ENCODE measurements at regions of chr19 and their contacts with region 1.

Region 1: GRCh38 chr19:18203863-18204393 is at the start of gene RAB3A:
- DNase-seq: peak; percentile 100
- H3K4me3 ChIP-seq: peak within 1 kb of the TSS; percentile 46 to 81 (median 75)
- H3K27ac ChIP-seq: peak within 1 kb of the TSS; percentile 88
- H3K4me1 ChIP-seq: peaks cover 10% of the 10 kb centered on the region
- H3K27me3 ChIP-seq: peaks cover 0 to 2% of the 10 kb centered on the region in 2 experiments
- CTCF ChIP-seq: no peak
- POLR2A ChIP-seq: no peak
- total RNA-seq, gene RAB3A: 0.88 and 1.9 TPM in 2 replicates

Region 2: DNA sequence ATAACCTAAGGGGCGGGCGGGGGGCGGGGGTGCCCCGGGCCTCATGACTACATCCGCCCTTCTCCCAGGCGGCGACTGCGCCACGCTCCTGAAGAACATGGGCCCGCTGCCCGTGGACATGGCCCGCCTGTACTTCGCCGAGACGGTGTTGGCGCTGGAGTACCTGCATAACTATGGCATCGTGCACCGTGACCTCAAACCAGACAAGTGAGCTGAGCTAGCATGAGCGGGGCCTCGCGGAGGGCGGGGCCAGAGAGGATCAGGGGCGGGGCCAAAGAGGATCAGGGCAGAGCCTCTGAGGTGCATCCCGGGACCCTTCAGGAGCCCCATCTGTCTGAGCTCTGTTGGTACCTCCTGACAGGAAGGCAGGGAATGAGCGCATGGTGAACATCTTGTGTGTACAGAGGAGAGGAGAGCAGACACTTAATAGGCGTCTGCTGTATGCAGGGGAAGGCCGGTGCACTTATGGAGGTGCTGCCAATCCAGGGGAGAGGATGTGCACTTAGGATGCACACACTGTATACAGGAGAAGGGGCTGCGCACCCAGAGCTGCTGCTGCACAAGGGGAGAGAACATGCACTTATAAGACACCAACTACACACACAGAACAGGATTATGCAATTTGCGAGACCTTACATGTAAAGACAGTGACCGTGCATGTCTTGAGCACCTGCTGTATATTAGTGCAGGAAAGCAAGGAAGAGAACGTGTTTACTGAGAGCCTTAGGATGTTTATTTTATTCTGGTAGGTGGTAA is 71.9 kb before region 1 on chr19:
- CTCF ChIA-PET with region 1: no interaction called
- POLR2A ChIA-PET with region 1: no interaction called
- dilution Hi-C with region 1: no loop called
- intact Hi-C with region 1: no loop called
- DNase-seq: no peak
- H3K4me3 ChIP-seq: no peak overlapping the region
- H3K27ac ChIP-seq: no peak overlapping the region
- H3K4me1 ChIP-seq: no peaks in the 10 kb centered on the region
- H3K27me3 ChIP-seq: no peaks in the 10 kb centered on the region
- CTCF ChIP-seq: no peak
- POLR2A ChIP-seq: no peak

Region 3: GRCh38 chr19:18192673-18193387 is 11.1 kb before region 1 on chr19 and contains the start of gene MPV17L2:
- CTCF ChIA-PET with region 1: interaction called, 25 read pairs
- POLR2A ChIA-PET with region 1: no interaction called
- dilution Hi-C with region 1: no loop called
- intact Hi-C with region 1: loop called (anchors 1 kb)
- DNase-seq: peak; percentile 100
- H3K4me3 ChIP-seq: peak within 1 kb of the TSS; percentile 78 to 85 (median 82)
- H3K27ac ChIP-seq: peak within 1 kb of the TSS; percentile 56
- H3K4me1 ChIP-seq: peaks cover 14% of the 10 kb centered on the region
- H3K27me3 ChIP-seq: no peaks in the 10 kb centered on the region
- CTCF ChIP-seq: no peak
- POLR2A ChIP-seq: peak; percentile 66
- total RNA-seq, gene MPV17L2: 13.8 and 16.1 TPM in 2 replicates

Region 4: DNA sequence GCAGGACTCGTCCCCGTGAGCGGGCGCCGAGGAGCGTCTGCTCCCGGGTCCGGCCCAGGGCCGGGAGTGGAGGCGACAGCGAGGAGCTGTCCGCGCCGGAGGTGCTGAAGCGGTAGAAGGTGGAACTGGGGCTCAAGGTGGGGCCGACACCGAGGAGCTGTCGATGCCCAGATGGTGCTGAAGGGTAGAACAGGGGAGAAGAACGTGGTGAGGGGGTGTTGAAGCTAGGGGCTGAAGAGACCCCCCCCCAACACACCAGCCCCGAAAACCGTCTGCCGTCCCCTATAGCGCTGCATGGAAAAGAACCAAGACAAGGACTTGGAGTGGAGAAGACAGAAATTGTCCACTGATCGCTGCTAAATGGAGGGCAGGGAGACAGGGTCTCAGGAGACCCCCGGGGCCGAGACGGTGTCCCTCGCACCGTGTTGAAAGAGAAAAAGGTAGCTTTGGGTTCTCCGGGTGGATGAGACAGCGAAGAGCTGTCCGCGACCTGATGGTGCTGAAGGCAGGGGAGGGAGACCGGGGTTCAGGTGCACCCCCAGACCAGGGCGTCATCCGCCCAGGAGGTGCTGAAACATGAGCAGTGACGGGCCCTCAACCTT is 29.4 kb after region 1 on chr19:
- CTCF ChIA-PET with region 1: interaction called, 20 read pairs
- POLR2A ChIA-PET with region 1: no interaction called
- dilution Hi-C with region 1: no loop called
- intact Hi-C with region 1: no loop called
- DNase-seq: peak; percentile 34
- H3K4me3 ChIP-seq: no peak overlapping the region
- H3K27ac ChIP-seq: no peak overlapping the region
- H3K4me1 ChIP-seq: no peaks in the 10 kb centered on the region
- H3K27me3 ChIP-seq: peaks cover 0 to 6% of the 10 kb centered on the region in 2 experiments
- CTCF ChIP-seq: no peak
- POLR2A ChIP-seq: no peak

Region 5: GRCh38 chr19:18245297-18245696 is 41.4 kb after region 1 on chr19:
- CTCF ChIA-PET with region 1: interaction called, 296 read pairs
- POLR2A ChIA-PET with region 1: no interaction called
- dilution Hi-C with region 1: no loop called
- intact Hi-C with region 1: no loop called
- DNase-seq: no peak
- H3K4me3 ChIP-seq: no peak overlapping the region
- H3K27ac ChIP-seq: no peak overlapping the region
- H3K4me1 ChIP-seq: no peaks in the 10 kb centered on the region
- H3K27me3 ChIP-seq: no peaks in the 10 kb centered on the region
- CTCF ChIP-seq: no peak
- POLR2A ChIP-seq: no peak

Region 6: GRCh38 chr19:18328340-18329034 is 124.6 kb after region 1 on chr19:
- CTCF ChIA-PET with region 1: interaction called, 22 read pairs
- POLR2A ChIA-PET with region 1: no interaction called
- dilution Hi-C with region 1: no loop called
- intact Hi-C with region 1: loop called (anchors 1 kb)
- DNase-seq: peak; percentile 97
- H3K4me3 ChIP-seq: peak overlapping the region in 2 of 3 experiments; percentile 4 to 16
- H3K27ac ChIP-seq: peak overlapping the region; percentile 13
- H3K4me1 ChIP-seq: peaks cover 8% of the 10 kb centered on the region
- H3K27me3 ChIP-seq: peaks cover 0 to 2% of the 10 kb centered on the region in 2 experiments
- CTCF ChIP-seq: peak; percentile 84 to 97
- POLR2A ChIP-seq: no peak

Measured in endothelial cell of umbilical vein (primary cell).